Activated naive CD4-positive, alpha-beta T cell treated with anti-CD3 and anti-CD28 coated beads for 36 hours (primary cell): ENCODE measurements at regions of chr10 and their contacts with region 1.

Region 1: DNA sequence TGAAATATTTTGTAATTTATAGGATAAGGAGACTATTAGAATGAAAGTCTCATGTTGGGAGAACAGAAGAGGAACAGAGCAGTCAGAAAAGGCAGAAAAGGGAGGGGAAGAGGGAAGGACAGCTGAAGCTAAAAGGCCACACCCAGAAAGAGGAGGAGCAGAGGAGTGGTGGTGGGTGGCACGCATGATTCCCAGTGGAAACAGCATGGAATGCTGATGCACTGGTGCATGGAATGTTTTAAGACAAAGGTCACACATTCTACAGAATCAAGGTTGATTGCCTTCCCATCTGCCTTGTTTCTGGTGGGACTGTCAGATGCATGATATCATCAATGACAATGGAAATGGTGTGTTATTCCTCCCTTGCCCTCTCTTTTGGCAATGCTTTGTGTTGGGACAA is 285.4 kb upstream of the MKI67 start:
- DNase-seq: no peak
- H3K4me3 Mint-ChIP-seq: no peak overlapping the region
- H3K27ac Mint-ChIP-seq: no peak overlapping the region
- H3K4me1 Mint-ChIP-seq: no peaks in the 10 kb centered on the region
- H3K27me3 Mint-ChIP-seq: peaks cover 4% of the 10 kb centered on the region

Region 2: GRCh38 chr10:128429835-128430513 is 18.4 kb after region 1 on chr10:
- CTCF ChIA-PET with region 1: no interaction called
- intact Hi-C with region 1: no loop called
- DNase-seq: no peak
- H3K4me3 Mint-ChIP-seq: no peak overlapping the region
- H3K27ac Mint-ChIP-seq: no peak overlapping the region
- H3K4me1 Mint-ChIP-seq: no peaks in the 10 kb centered on the region
- H3K27me3 Mint-ChIP-seq: peaks cover 2% of the 10 kb centered on the region

Region 3: DNA sequence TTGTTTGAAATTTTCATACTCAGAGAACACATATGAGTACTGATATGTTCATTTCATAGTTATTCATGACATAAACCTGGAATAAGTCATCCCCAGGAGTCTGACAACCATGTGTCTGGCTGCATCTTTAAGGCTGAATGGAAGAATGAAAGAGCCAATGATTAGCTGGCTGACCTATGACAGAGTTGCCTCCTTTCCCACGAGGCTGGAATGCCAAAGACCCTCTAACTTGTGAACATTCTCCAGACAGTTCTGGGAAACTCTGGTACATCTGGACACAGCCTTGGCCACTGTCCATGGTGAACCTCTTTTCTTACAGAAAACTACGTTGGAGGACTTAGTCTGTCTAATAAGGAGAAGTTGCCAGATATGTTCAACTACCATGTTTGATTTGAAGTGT is 95.4 kb after region 1 on chr10:
- CTCF ChIA-PET with region 1: no interaction called
- intact Hi-C with region 1: no loop called
- DNase-seq: no peak
- H3K4me3 Mint-ChIP-seq: no peak overlapping the region
- H3K27ac Mint-ChIP-seq: no peak overlapping the region
- H3K4me1 Mint-ChIP-seq: no peaks in the 10 kb centered on the region
- H3K27me3 Mint-ChIP-seq: peaks cover 2% of the 10 kb centered on the region

Region 4: DNA sequence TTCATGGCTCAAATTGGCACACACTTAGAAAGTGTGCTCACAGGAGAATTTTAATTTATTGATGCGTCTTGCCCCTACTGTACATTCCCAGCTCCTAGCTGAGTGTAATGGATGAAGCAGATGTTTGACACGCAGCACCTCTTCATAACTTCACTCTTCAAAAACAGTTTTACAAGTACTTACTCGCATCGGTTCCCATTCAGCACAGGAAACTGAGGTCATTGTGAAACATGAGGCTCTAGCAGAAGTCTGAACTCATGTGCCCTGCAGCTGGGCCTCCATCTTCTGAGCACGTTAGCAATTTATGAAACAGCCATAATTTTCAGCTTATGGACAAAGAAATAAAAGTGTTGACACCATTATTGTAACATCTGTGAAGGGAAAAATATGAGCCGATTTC is 496.5 kb after region 1 on chr10:
- CTCF ChIA-PET with region 1: interaction called, 10 read pairs
- intact Hi-C with region 1: no loop called
- DNase-seq: peak; percentile 22
- H3K4me3 Mint-ChIP-seq: no peak overlapping the region
- H3K27ac Mint-ChIP-seq: no peak overlapping the region
- H3K4me1 Mint-ChIP-seq: peaks cover 12% of the 10 kb centered on the region
- H3K27me3 Mint-ChIP-seq: no peaks in the 10 kb centered on the region